GM12878 (cell line): ENCODE measurements at regions of chr5 and their contacts with region 1.

Region 1: DNA sequence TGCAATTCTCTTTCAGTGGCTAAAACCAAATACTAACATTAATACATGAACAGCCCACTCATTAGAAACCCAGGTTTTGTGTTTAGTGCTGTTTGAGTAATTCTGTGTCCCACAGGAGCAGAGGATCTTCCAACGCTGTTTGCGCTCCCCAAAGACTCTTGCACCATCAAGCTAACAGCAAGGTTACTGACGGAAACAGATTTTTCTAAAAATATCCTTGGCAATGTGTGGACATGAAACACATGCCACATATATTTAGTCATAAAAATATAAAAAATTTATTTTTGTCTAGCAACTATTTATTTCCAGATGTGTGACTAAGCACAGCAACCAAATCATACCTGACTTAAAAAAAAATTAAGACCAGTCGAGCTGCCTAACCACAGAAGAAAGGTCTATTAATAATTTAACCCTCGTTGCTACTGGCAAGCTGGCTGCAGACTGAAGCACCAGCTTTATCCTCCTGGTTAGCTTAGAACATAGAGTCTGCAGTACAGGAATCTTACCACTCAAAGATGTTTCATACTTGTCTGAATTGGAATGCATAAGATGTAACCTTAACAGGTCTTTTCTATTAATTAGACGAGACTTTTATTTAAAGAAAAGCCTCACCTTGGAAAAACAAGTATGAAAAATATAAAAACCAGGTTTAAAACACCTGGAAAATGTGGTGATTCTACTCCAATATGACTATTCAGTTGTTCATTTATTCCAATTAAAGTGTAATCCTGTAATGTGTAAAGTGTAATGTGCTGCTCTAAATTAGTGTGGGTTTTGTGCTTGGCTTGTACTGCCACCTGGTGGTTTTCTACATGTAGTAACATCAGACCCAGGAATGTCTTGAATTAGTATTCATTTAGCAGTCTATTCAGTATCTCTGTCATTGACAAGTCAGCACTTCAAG is 272.5 kb downstream of the EPB41L4A start:
- DNase-seq: peak; percentile 74
- ATAC-seq: peak; percentile 82
- H3K4me3 ChIP-seq: no peak overlapping the region
- H3K27ac ChIP-seq: no peak overlapping the region; the same call in 1 of the 2 replicates
- H3K4me1 ChIP-seq: peaks cover 13% of the 10 kb centered on the region; the same call in 1 of the 2 replicates
- H3K27me3 ChIP-seq: no peaks in the 10 kb centered on the region
- CTCF ChIP-seq: peak; percentile 59 to 89 (median 67); a peak in 5 of 6 replicates
- EP300 ChIP-seq: 0 out of 4 replicates have a peak, but pooled peaks of 1 of the 2 experiments have one; percentile 36
- POLR2A ChIP-seq: no peak
- RAD21 ChIP-seq: peak; percentile 99

Region 2: GRCh38 chr5:111278845-111279504 is 867.6 kb before region 1 on chr5:
- CTCF ChIA-PET with region 1: no interaction called
- POLR2A ChIA-PET with region 1: no interaction called
- RAD21 ChIA-PET with region 1: no interaction called
- SMC1A ChIA-PET with region 1: no interaction called
- in situ Hi-C with region 1: no loop called
- intact Hi-C with region 1: loop called (anchors 5 kb)
- DNase-seq: peak; percentile 33
- ATAC-seq: peak; percentile 97
- H3K4me3 ChIP-seq: no peak overlapping the region
- H3K27ac ChIP-seq: no peak overlapping the region
- H3K4me1 ChIP-seq: 0 out of 2 replicates have a peak, but pooled peaks cover 4% of the 10 kb centered on the region
- H3K27me3 ChIP-seq: no peaks in the 10 kb centered on the region
- CTCF ChIP-seq: peak; percentile 76 to 93 (median 79)
- EP300 ChIP-seq: no peak
- POLR2A ChIP-seq: no peak
- RAD21 ChIP-seq: peak; percentile 80

Region 3: GRCh38 chr5:111556501-111556900 is 590.1 kb before region 1 on chr5:
- CTCF ChIA-PET with region 1: interaction called, 108 read pairs
- POLR2A ChIA-PET with region 1: no interaction called
- RAD21 ChIA-PET with region 1: interaction called, 62 read pairs
- SMC1A ChIA-PET with region 1: interaction called, 93 read pairs
- in situ Hi-C with region 1: loop called (anchors 5 kb)
- intact Hi-C with region 1: no loop called
- DNase-seq: no peak
- ATAC-seq: no peak
- H3K4me3 ChIP-seq: no peak overlapping the region
- H3K27ac ChIP-seq: no peak overlapping the region
- H3K4me1 ChIP-seq: no peaks in the 10 kb centered on the region
- H3K27me3 ChIP-seq: no peaks in the 10 kb centered on the region
- CTCF ChIP-seq: no peak
- EP300 ChIP-seq: no peak
- POLR2A ChIP-seq: no peak
- RAD21 ChIP-seq: no peak

Region 4: GRCh38 chr5:111820072-111820471 is 326.5 kb before region 1 on chr5:
- CTCF ChIA-PET with region 1: interaction called, 7 read pairs
- POLR2A ChIA-PET with region 1: no interaction called
- RAD21 ChIA-PET with region 1: interaction called, 21 read pairs
- SMC1A ChIA-PET with region 1: interaction called, 6 read pairs
- in situ Hi-C with region 1: no loop called
- intact Hi-C with region 1: no loop called
- DNase-seq: no peak
- ATAC-seq: no peak
- H3K4me3 ChIP-seq: no peak overlapping the region
- H3K27ac ChIP-seq: no peak overlapping the region
- H3K4me1 ChIP-seq: no peaks in the 10 kb centered on the region
- H3K27me3 ChIP-seq: no peaks in the 10 kb centered on the region
- CTCF ChIP-seq: 0 out of 6 replicates have a peak, but pooled peaks of 1 of the 3 experiments have one; percentile 4
- EP300 ChIP-seq: no peak
- POLR2A ChIP-seq: no peak
- RAD21 ChIP-seq: no peak

Region 5: DNA sequence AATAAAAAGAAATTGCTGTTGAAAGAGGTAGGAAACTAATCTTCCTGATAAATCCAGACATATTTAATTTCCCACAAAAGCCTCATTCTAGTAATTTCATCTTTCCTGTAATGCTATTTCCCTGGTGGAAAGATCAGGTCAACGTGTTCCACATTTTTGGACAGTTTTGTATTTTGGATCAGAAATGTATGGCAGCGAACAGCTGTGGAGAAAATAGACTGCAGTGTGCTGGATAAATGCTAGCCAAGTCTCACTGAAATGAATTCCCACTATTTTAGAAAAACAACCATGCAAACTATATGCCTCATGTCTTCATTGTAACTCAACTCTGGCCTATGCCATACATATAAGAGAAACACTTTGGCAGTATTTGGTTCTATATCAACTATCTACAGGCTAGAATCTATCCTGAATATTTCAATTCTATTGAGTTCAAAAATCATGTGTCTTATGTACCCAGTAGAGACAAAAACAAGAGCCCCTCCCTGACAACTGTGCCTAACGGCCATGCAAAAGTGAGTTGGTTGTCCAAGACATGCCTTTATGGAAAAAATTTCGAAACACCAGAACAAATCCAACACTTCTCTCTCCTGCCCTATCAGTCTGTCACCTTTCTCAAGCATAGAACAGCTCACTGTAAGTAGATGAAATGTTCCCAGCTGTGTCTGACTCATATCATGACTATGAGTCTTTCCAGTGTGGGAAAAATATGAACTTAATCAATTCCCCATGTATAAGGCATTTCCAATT is 198.3 kb before region 1 on chr5:
- CTCF ChIA-PET with region 1: no interaction called
- POLR2A ChIA-PET with region 1: no interaction called
- RAD21 ChIA-PET with region 1: no interaction called
- SMC1A ChIA-PET with region 1: no interaction called
- in situ Hi-C with region 1: no loop called
- intact Hi-C with region 1: no loop called
- DNase-seq: no peak
- ATAC-seq: no peak
- H3K4me3 ChIP-seq: no peak overlapping the region
- H3K27ac ChIP-seq: no peak overlapping the region
- H3K4me1 ChIP-seq: no peaks in the 10 kb centered on the region
- H3K27me3 ChIP-seq: no peaks in the 10 kb centered on the region
- CTCF ChIP-seq: no peak
- EP300 ChIP-seq: no peak
- POLR2A ChIP-seq: no peak
- RAD21 ChIP-seq: no peak

Region 6: DNA sequence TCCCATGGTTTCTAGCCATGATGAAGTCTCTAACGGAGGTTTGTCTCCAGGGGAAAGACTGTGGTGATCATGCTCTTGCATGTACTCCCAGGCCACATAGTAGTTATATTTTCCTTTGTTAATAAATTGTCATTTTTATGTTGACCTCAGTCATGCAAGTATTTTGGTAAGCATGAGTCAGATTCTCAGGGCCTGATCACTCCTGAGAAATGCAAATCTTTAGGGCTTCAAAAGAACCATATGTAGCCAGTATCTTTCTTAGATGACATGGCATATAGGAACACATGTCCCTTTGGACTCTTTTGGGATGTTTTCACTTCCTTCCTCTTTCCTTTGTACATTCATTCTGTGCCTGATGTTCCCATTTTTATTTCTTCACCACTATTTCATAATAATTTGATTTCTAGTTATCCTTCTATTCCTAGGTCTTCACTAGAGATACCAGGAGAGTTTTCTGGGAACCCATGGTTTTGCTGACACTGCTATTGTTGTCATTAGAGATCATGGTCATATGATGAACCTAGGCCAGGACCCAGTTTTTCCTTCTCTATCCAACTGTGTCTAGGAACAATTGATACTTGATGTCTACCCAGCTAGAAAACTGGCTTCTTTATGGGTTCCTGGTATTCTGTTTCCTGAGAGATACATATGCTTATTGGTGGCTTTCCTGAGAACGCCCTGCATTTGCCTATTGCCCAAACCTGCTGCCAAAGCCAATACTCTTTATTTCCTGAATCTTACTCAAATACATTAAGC is 141.5 kb before region 1 on chr5:
- CTCF ChIA-PET with region 1: no interaction called
- POLR2A ChIA-PET with region 1: no interaction called
- RAD21 ChIA-PET with region 1: no interaction called
- SMC1A ChIA-PET with region 1: no interaction called
- in situ Hi-C with region 1: no loop called
- intact Hi-C with region 1: loop called (anchors 5 kb)
- DNase-seq: peak; percentile 53
- ATAC-seq: peak; percentile 90
- H3K4me3 ChIP-seq: no peak overlapping the region
- H3K27ac ChIP-seq: peak overlapping the region; percentile 8; the same call in 1 of the 2 replicates
- H3K4me1 ChIP-seq: peaks cover 7% of the 10 kb centered on the region
- H3K27me3 ChIP-seq: no peaks in the 10 kb centered on the region
- CTCF ChIP-seq: no peak
- EP300 ChIP-seq: peak in 1 of 2 experiments; percentile 9; a peak in 2 of 4 replicates
- POLR2A ChIP-seq: no peak
- RAD21 ChIP-seq: no peak

Region 7: GRCh38 chr5:112061666-112062065 is 84.9 kb before region 1 on chr5:
- CTCF ChIA-PET with region 1: interaction called, 3 read pairs
- POLR2A ChIA-PET with region 1: no interaction called
- RAD21 ChIA-PET with region 1: no interaction called
- SMC1A ChIA-PET with region 1: interaction called, 4 read pairs
- in situ Hi-C with region 1: no loop called
- intact Hi-C with region 1: loop called (anchors 2 kb)
- DNase-seq: no peak
- ATAC-seq: no peak
- H3K4me3 ChIP-seq: no peak overlapping the region
- H3K27ac ChIP-seq: no peak overlapping the region
- H3K4me1 ChIP-seq: no peaks in the 10 kb centered on the region; the same call in 1 of the 2 replicates
- H3K27me3 ChIP-seq: no peaks in the 10 kb centered on the region
- CTCF ChIP-seq: no peak
- EP300 ChIP-seq: no peak
- POLR2A ChIP-seq: no peak
- RAD21 ChIP-seq: no peak